ENCODE measurements at regions of chr2 and their contacts with region 1.

Region 1: DNA sequence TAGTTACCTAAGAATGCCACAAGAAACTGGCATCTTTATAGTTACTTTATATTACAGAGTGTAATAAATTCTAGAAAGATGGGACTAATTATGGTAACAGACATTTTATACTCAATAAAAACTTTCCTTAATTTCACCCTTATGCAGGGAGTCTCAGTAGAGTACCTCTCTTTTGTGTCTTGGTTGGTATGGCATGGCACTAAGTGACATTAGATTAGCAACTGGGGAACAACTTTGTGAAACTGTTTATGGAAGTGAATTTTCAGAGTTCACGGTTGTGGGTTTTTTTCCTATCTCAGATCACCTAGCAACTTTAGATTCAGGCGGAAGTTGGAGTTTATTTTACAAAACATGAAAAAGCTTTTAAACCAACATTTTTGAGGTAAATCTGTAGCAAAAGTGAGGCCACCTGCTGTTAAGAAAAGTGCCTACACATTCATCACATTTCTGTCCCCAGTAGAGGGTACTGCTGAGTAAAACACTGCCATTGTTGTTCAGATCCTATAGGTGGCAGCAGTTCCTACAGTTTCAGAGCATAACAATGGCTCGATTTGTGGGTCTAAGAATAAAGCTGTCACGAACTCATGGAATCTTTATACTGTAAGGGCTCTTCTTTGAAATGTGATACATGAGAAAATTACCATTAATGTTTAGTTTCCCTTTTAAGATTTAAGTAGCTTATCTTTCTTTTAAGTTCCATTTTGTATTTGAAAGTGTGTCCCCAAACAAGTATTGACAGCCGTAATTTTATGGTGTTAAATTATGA is 117.6 kb downstream of the CAMKMT start:
- DNase-seq: peak; percentile 64
- ATAC-seq: peak; percentile 100
- H3K4me3 Mint-ChIP-seq: no peak overlapping the region
- H3K27ac Mint-ChIP-seq: no peak overlapping the region
- H3K4me1 Mint-ChIP-seq: peaks cover 3% of the 10 kb centered on the region
- H3K27me3 Mint-ChIP-seq: no peaks in the 10 kb centered on the region

Region 2: DNA sequence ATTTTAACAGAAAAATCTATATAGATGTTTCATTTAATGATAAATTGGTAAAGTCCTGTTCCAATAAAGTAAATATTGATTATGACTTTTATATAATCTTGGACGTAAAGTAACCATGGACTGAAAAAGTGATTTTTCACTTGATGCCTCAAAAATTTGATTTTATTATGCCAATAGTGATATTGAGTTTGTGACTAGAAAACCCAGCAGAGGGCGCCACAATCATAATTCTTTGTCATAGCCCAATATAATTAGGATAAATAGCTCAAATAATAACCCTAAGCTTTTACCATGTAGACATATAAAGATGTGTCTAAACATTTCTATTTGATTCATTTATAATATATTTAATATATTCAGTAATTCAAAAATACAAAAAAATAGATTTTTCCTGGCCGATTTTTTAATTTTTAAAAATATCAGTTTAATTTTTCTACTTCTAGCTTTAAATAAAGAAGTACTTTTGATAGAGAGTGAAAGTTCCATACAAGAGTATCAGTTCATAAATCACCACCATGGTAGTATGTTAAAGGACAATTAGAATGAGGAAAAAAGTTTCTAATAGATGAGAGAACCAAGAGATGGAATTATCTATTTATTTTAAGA is 86.9 kb before region 1 on chr2:
- CTCF ChIA-PET with region 1: interaction called, 17 read pairs
- POLR2A ChIA-PET with region 1: no interaction called
- DNase-seq: peak; percentile 61
- ATAC-seq: no peak
- H3K4me3 Mint-ChIP-seq: no peak overlapping the region
- H3K27ac Mint-ChIP-seq: no peak overlapping the region
- H3K4me1 Mint-ChIP-seq: no peaks in the 10 kb centered on the region
- H3K27me3 Mint-ChIP-seq: no peaks in the 10 kb centered on the region

Region 3: GRCh38 chr2:44456946-44457345 is 22.4 kb before region 1 on chr2:
- CTCF ChIA-PET with region 1: interaction called, 15 read pairs
- POLR2A ChIA-PET with region 1: no interaction called
- DNase-seq: no peak
- ATAC-seq: no peak
- H3K4me3 Mint-ChIP-seq: no peak overlapping the region
- H3K27ac Mint-ChIP-seq: no peak overlapping the region
- H3K4me1 Mint-ChIP-seq: no peaks in the 10 kb centered on the region
- H3K27me3 Mint-ChIP-seq: no peaks in the 10 kb centered on the region

Region 4: DNA sequence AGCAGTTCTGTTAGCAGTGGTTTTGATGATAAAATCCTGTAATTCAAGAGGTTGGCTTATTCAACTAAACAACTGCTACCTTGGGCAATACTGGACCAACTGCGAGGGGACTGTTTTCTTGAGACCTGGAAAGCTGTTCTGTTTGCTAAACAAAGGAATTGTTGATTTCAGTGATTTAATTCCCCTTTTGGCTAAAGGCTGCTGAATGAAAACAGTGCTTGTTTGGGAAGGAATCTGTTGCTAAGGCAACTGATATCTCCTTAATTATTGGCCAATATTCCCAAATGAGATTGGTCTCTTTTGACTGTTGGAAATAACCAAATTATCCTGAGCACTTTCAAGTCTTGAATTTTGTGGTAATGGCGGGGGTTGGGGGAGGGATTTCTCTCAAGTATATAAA is 19.2 kb after region 1 on chr2:
- CTCF ChIA-PET with region 1: interaction called, 13 read pairs
- POLR2A ChIA-PET with region 1: no interaction called
- DNase-seq: no peak
- ATAC-seq: no peak
- H3K4me3 Mint-ChIP-seq: no peak overlapping the region
- H3K27ac Mint-ChIP-seq: no peak overlapping the region
- H3K4me1 Mint-ChIP-seq: no peaks in the 10 kb centered on the region
- H3K27me3 Mint-ChIP-seq: peaks cover 3% of the 10 kb centered on the region

Region 5: DNA sequence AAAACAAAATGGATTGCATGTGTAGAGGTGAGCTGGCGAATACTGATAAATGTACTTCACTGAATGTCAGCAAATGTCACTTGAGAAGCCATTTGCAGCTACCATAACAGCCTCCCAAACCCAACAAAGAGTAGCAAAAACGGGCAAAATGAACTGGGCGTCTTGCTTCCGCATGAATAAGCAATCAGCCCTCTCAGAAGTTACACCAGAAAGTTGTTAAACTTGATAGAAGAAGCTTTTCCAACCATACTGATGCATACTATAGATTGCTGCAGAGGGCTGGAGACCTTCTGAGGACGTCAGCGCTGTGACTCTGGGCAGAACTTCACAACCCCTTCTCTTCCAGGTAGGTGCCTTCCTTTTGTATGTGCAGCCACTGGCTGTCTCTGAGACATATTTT is 443.5 kb after region 1 on chr2:
- CTCF ChIA-PET with region 1: interaction called, 12 read pairs
- POLR2A ChIA-PET with region 1: no interaction called
- DNase-seq: no peak
- ATAC-seq: no peak
- H3K4me3 Mint-ChIP-seq: no peak overlapping the region
- H3K27ac Mint-ChIP-seq: no peak overlapping the region
- H3K4me1 Mint-ChIP-seq: no peaks in the 10 kb centered on the region
- H3K27me3 Mint-ChIP-seq: peaks cover 67% of the 10 kb centered on the region